Gastrocnemius medialis (tissue), 4 donors: ENCODE measurements at regions of chr3 and their contacts with region 1.

Region 1: DNA sequence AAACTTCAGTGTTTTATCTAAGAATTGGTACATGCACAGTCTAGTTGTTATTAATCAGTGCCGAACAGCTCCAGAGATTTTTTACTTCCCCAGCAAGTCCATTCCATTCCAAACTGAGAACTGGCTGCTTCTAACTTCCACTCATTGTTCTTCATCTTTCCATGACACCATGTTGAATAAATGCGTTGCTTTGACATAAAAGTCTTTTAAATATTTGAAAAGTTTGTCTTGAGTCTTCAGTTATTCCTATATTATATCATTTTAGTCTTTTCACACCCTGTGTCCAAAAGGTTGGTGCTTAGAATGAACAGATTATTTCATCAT is 65.4 kb downstream of the CMSS1 start:
- DNase-seq: no peak
- ATAC-seq: no peak
- H3K4me3 ChIP-seq: no peak overlapping the region
- H3K27ac ChIP-seq: peak overlapping the region; percentile 2 to 93 (median 91)
- H3K4me1 ChIP-seq: peaks cover 26 to 67% of the 10 kb centered on the region in 2 donors
- H3K27me3 ChIP-seq: no peaks in the 10 kb centered on the region
- CTCF ChIP-seq: no peak
- POLR2A ChIP-seq: no peak

Region 2: GRCh38 chr3:99915911-99916432 is 32.9 kb after region 1 on chr3:
- in situ Hi-C with region 1: no loop called
- intact Hi-C with region 1: loop called (anchors 2 kb)
- DNase-seq: no peak
- ATAC-seq: no peak
- H3K4me3 ChIP-seq: no peak overlapping the region
- H3K27ac ChIP-seq: no peak overlapping the region
- H3K4me1 ChIP-seq: peaks cover 32 to 37% of the 10 kb centered on the region in 2 donors
- H3K27me3 ChIP-seq: no peaks in the 10 kb centered on the region
- CTCF ChIP-seq: no peak
- POLR2A ChIP-seq: no peak